ENCODE measurements at regions of chr17 and their contacts with region 1.

Region 1: GRCh38 chr17:82400830-82401229 is 17.3 kb upstream of the HEXD start:
- DNase-seq: peak; percentile 63
- ATAC-seq: peak; percentile 13

Region 2: DNA sequence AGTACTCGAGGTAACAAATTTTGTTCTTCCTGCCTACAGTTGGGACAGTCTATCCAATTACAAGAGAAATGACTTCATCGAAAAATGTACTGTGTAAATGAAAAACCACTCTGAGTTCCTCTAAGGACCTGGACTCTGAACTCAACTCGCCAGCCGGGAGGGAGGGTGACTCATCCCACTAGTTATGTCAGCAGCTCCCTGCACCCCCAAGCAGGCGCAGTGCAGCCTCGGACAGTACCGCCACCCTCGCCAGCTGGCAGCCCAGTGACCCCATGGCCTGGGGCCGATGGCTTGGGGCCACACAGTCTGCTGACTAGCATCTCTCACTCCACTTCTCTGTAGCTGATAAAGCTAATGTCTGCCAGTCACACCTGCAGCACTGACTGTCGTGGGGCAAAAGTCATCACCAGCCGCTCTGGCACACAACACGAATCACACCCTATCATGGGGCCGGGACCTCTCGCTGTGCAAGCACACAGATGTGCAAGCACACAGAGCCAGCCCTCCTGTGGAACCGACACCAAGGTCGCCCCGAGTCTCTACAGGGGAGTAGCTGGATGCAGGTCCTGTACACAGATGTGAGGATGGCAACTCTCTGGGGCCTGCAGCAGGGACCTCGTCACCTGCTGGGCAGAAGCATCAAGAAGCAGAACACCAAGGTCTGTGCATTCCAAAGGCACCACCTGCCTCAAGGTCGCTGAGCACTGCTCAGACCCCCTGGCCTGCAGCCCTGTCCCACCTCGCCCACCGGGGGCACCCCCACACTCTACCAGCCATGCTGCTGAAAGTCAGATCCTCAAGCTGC is 133.1 kb before region 1 on chr17:
- intact Hi-C with region 1: no loop called
- DNase-seq: peak; percentile 96
- ATAC-seq: peak; percentile 95

Region 3: GRCh38 chr17:82351716-82352488 is 48.9 kb before region 1 on chr17:
- intact Hi-C with region 1: loop called (anchors 10 kb)
- DNase-seq: peak; percentile 87
- ATAC-seq: peak; percentile 88

Measured in left ventricle myocardium superior (tissue), 1 donor.